OCI-LY7 (cell line): ENCODE measurements at regions of chr19 and their contacts with region 1.

Region 1: GRCh38 chr19:17739121-17739875 is 12.0 kb upstream of the FCHO1 start:
- DNase-seq: peak; percentile 80
- H3K4me3 ChIP-seq: peak overlapping the region; percentile 3
- H3K27ac ChIP-seq: peak overlapping the region; percentile 73
- H3K4me1 ChIP-seq: peaks cover 43% of the 10 kb centered on the region
- CTCF ChIP-seq: no peak

Region 2: GRCh38 chr19:17755977-17756670 is 16.8 kb after region 1 on chr19:
- CTCF ChIA-PET with region 1: no interaction called
- POLR2A ChIA-PET with region 1: interaction called, 14 read pairs
- intact Hi-C with region 1: loop called (anchors 2 kb)
- DNase-seq: peak; percentile 91
- H3K4me3 ChIP-seq: peak overlapping the region; percentile 54
- H3K27ac ChIP-seq: peak overlapping the region; percentile 93
- H3K4me1 ChIP-seq: peaks cover 70% of the 10 kb centered on the region
- CTCF ChIP-seq: no peak